Transverse colon (tissue), 4 donors: ENCODE measurements at regions of chr12 and their contacts with region 1.

Region 1: GRCh38 chr12:3252450-3252891 is 175.3 kb downstream of the TSPAN9 start:
- DNase-seq: peak; percentile 72
- H3K4me3 ChIP-seq: no peak overlapping the region
- H3K27ac ChIP-seq: peak overlapping the region; percentile 29 to 79 (median 61)
- H3K4me1 ChIP-seq: peaks cover 5 to 19% (median 15%) of the 10 kb centered on the region in 4 donors
- H3K27me3 ChIP-seq: no peaks in the 10 kb centered on the region
- CTCF ChIP-seq: no peak
- EP300 ChIP-seq: no peak
- POLR2A ChIP-seq: no peak

Region 2: GRCh38 chr12:3135522-3136461 is 116.7 kb before region 1 on chr12:
- in situ Hi-C with region 1: loop called in 2 of 4 experiments (anchors 10 to 25 kb)
- intact Hi-C with region 1: no loop called
- DNase-seq: peak; percentile 23
- H3K4me3 ChIP-seq: no peak overlapping the region
- H3K27ac ChIP-seq: no peak overlapping the region
- H3K4me1 ChIP-seq: peaks cover 5 to 17% (median 13%) of the 10 kb centered on the region in 4 donors
- H3K27me3 ChIP-seq: no peaks in the 10 kb centered on the region
- CTCF ChIP-seq: peak; percentile 72 to 80 (median 73)
- EP300 ChIP-seq: no peak
- POLR2A ChIP-seq: no peak